Heart right ventricle (tissue), 16 donors: ENCODE measurements at regions of chr17 and their contacts with region 1.

Region 1: GRCh38 chr17:4908301-4908700 is 5.4 kb upstream of the CHRNE start:
- DNase-seq: no peak
- ATAC-seq: peak in 6 of 8 donors; percentile 18 to 55 (median 38)
- H3K4me3 ChIP-seq: no peak overlapping the region
- H3K27ac ChIP-seq: peak overlapping the region in 9 of 10 donors; percentile 28 to 73 (median 56)
- H3K4me1 ChIP-seq: peaks cover 0 to 24% (median 12%) of the 10 kb centered on the region in 9 donors
- H3K27me3 ChIP-seq: no peaks in the 10 kb centered on the region
- CTCF ChIP-seq: no peak

Region 2: GRCh38 chr17:4948931-4949320 is 40.6 kb after region 1 on chr17:
- intact Hi-C with region 1: loop called in 1 of 10 experiments (anchors 5 kb)
- DNase-seq: peak; percentile 83 to 87
- ATAC-seq: peak; percentile 72 to 87 (median 82)
- H3K4me3 ChIP-seq: peak overlapping the region; percentile 32 to 100 (median 98)
- H3K27ac ChIP-seq: peak overlapping the region; percentile 89 to 100 (median 99)
- H3K4me1 ChIP-seq: peaks cover 18 to 76% (median 51%) of the 10 kb centered on the region in 9 donors
- H3K27me3 ChIP-seq: no peaks in the 10 kb centered on the region
- CTCF ChIP-seq: no peak

Region 3: DNA sequence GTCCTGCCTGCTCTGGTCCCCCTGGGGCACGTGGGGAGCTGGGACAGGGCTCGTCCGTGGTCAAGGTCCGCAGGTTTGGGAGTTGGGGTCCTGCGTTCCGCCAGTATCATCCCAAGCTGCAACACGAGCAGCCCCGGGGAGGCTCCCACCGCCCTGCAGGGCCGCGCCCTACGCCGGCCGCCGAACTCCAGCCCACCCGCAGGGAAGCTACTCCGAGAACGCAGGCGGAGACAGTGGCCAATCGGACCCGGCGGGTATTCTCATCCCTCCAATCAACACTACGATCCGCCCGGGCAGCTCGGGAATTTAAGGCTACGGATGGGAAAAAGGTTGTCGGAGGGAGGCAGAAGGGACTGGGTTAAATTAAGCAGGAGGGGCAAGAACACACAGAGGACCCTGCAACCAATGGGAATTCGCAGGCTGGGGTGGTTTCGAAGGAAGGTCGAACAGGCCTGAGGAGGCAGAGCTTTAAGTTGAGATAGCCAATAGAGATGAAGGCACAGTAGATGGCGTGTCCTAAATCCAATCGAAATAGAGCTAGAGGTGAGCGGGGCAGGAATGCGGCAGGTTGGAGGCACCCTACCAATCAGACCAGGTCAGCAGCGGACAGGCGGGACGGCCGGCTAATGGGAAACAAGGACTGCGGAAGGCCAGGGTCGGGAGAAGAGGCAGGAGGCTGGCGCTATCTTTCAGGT is 58.7 kb after region 1 on chr17:
- intact Hi-C with region 1: loop called in 3 of 10 experiments (anchors 1 to 5 kb)
- DNase-seq: peak; percentile 96 to 99
- ATAC-seq: peak; percentile 88 to 95 (median 92)
- H3K4me3 ChIP-seq: peak overlapping the region; percentile 53 to 82 (median 72)
- H3K27ac ChIP-seq: peak overlapping the region; percentile 89 to 97 (median 96)
- H3K4me1 ChIP-seq: peaks cover 11 to 45% (median 34%) of the 10 kb centered on the region in 9 donors
- H3K27me3 ChIP-seq: no peaks in the 10 kb centered on the region
- CTCF ChIP-seq: no peak

Region 4: GRCh38 chr17:4986951-4987766 is 78.9 kb after region 1 on chr17 and contains the start of gene CAMTA2:
- intact Hi-C with region 1: loop called in 7 of 10 experiments (anchors 1 to 10 kb)
- DNase-seq: peak; percentile 94
- ATAC-seq: peak; percentile 94 to 97 (median 96)
- H3K4me3 ChIP-seq: peak within 1 kb of the TSS; percentile 61 to 97 (median 89)
- H3K27ac ChIP-seq: peak within 1 kb of the TSS; percentile 83 to 98 (median 95)
- H3K4me1 ChIP-seq: peaks cover 5 to 44% (median 26%) of the 10 kb centered on the region in 9 donors
- H3K27me3 ChIP-seq: no peaks in the 10 kb centered on the region
- CTCF ChIP-seq: peak; percentile 58 to 93 (median 78)
- total RNA-seq, gene CAMTA2: 26.0 to 42.0 (median 33.7) TPM

Region 5: DNA sequence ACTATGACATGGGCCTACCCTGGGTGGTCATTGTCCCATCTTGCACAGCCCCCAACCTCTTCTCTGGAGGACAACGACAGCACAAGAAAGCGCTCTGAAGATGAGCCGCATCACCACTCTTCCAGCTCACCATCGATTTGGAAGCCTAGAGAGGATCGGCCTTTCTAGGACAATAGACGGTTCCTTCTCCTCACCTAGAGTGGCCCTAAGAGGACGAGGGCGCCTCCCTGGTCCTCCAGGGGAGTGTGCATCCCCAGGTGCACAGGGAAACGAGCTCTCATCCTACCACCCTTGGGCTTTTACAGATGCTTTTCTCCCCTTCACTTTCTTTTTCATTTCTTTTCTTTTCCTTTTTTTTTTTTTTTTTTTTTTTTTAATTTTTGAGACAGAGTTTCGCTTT is 147.2 kb after region 1 on chr17:
- intact Hi-C with region 1: loop called in 6 of 10 experiments (anchors 5 to 10 kb)
- DNase-seq: no peak
- ATAC-seq: no peak
- H3K4me3 ChIP-seq: no peak overlapping the region
- H3K27ac ChIP-seq: no peak overlapping the region
- H3K4me1 ChIP-seq: no peaks in the 10 kb centered on the region
- H3K27me3 ChIP-seq: peaks cover 0 to 12% (median 0%) of the 10 kb centered on the region in 7 donors
- CTCF ChIP-seq: no peak

Region 6: DNA sequence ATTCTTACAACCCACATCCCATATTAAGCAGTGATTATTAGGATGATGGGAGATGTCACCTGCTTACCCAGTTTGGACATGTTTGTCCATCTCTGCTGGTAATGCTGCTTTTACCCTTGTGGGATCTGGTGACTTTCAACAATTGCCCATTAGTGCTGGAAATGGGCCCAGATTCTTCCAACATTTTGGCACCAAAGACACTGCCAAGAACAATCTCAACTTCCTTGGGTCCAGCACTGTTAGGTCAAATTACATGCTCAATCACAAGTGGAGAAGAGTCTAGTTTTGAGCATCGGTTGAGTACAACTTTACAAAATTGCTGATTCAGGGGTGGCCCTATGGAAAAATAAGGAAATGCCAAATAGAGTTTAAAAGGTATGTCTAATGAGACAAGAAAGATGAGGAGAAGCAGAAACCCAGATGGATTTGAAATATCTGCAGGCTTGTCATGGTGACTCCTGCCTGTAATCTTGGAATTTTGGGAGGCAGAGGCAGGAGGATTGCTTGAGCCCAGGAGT is 157.0 kb after region 1 on chr17:
- intact Hi-C with region 1: loop called (anchors 2 to 10 kb)
- DNase-seq: no peak
- ATAC-seq: no peak
- H3K4me3 ChIP-seq: no peak overlapping the region
- H3K27ac ChIP-seq: no peak overlapping the region
- H3K4me1 ChIP-seq: no peaks in the 10 kb centered on the region
- H3K27me3 ChIP-seq: peaks cover 0 to 4% (median 0%) of the 10 kb centered on the region in 7 donors
- CTCF ChIP-seq: no peak